ENCODE measurements at regions of chr2 and their contacts with region 1.

Region 1: GRCh38 chr2:24153478-24153877 is 21.4 kb upstream of the FAM228A start:
- DNase-seq: no peak
- H3K4me3 ChIP-seq: no peak overlapping the region
- H3K27ac ChIP-seq: no peak overlapping the region
- H3K4me1 ChIP-seq: no peaks in the 10 kb centered on the region
- H3K27me3 ChIP-seq: no peaks in the 10 kb centered on the region
- CTCF ChIP-seq: no peak
- EP300 ChIP-seq: no peak
- POLR2A ChIP-seq: no peak
- RAD21 ChIP-seq: no peak

Region 2: GRCh38 chr2:24164125-24164973 is 10.9 kb after region 1 on chr2:
- CTCF ChIA-PET with region 1: interaction called, 11 read pairs
- POLR2A ChIA-PET with region 1: no interaction called
- DNase-seq: peak; percentile 29 to 85
- H3K4me3 ChIP-seq: no peak overlapping the region
- H3K27ac ChIP-seq: no peak overlapping the region
- H3K4me1 ChIP-seq: no peaks in the 10 kb centered on the region; a peak in 1 of 7 replicates
- H3K27me3 ChIP-seq: no peaks in the 10 kb centered on the region
- CTCF ChIP-seq: peak; percentile 75 to 99 (median 77)
- EP300 ChIP-seq: no peak
- POLR2A ChIP-seq: no peak
- RAD21 ChIP-seq: peak; percentile 74 to 80

Region 3: DNA sequence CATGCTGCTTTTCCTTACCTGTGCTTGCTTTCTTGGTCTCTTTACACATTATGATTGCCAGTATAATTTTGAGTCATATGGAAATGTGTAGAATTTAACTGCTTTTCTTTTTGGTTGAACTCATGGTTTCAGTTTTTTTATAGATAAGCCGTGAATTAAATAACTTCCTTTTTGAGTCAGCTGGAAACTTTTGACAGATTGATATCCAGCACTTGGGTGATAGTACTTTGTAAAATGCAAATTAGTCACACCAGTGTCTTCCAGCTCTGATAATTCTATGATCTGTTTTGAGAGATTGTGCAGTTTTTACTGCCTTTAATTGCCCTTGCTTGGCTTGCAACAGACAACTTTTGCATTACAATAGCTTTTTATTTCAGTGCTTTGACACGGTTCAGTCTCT is 424.0 kb after region 1 on chr2:
- CTCF ChIA-PET with region 1: no interaction called
- POLR2A ChIA-PET with region 1: no interaction called
- DNase-seq: no peak
- H3K4me3 ChIP-seq: no peak overlapping the region
- H3K27ac ChIP-seq: no peak overlapping the region
- H3K4me1 ChIP-seq: peaks cover 0 to 8% (median 0%) of the 10 kb centered on the region in 4 experiments; a peak in 2 of 7 replicates
- H3K27me3 ChIP-seq: no peaks in the 10 kb centered on the region
- CTCF ChIP-seq: no peak
- EP300 ChIP-seq: no peak
- POLR2A ChIP-seq: no peak
- RAD21 ChIP-seq: no peak

Measured in H1 (cell line).